IMR-90 (cell line): ENCODE measurements at regions of chr1 and their contacts with region 1.

Region 1: DNA sequence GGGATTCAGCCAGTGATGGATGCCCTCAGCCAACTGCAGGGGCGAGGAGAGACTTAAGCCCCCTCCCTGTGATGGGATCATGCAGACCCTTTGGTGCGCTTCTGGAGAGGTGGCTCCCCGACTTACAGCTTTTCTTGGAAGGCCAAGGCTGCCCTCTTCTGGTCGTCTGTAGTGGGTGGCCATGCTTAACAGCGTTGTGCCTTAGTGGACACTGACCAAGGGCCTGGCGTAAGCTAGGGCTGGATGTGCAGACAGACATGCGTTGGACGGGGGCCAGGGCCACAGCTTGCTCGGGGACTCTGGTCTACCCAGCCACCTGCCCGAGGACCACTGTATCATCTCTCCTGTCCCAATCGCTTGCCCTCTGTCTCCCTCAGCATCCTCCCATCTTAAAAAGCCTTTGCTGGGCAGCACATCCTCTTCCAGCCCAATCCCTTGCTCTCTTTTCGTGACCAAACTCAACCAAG is 5.5 kb downstream of the AZIN2 start:
- DNase-seq: peak; percentile 78
- ATAC-seq: peak; percentile 87
- H3K4me3 ChIP-seq: no peak overlapping the region
- H3K27ac ChIP-seq: no peak overlapping the region
- H3K4me1 ChIP-seq: peaks cover 2% of the 10 kb centered on the region
- H3K27me3 ChIP-seq: no peaks in the 10 kb centered on the region
- CTCF ChIP-seq: peak; percentile 87
- POLR2A ChIP-seq: no peak
- RAD21 ChIP-seq: peak; percentile 82

Region 2: DNA sequence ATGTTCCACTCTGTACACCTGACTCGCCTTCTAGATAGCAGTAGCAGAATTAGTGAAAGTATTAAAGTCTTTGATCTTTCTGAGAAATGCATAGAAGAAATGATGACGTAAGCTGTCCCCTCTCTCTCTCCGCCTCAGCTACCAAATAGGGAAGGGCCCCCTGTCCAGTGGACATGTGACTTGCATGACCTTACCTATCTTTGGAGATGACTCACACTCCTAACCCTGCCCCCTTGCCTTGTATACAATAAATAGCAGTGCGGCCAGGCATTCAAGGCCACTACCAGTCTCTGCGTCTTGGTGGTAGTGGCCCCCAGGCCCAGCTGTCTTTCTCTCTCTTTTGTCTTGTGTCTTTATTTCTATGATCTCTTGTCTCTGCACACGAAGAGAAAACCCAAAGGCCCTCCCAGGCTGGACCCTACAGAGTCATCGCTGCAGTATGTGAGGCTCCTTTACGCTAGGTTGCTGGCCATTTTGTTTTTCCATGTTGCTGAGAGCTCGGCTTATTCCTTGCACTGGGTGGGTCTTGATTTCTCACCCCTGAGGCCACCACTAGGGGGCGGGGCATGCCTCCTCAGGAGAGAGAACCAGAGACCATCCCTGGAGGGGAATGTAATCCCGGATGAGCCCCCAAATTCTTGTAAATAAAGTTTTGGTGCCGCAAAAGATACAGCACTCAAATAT is 637.5 kb before region 1 on chr1:
- CTCF ChIA-PET with region 1: no interaction called
- POLR2A ChIA-PET with region 1: no interaction called
- dilution Hi-C with region 1: no loop called
- in situ Hi-C with region 1: no loop called
- intact Hi-C with region 1: loop called (anchors 5 kb)
- DNase-seq: no peak
- ATAC-seq: no peak
- H3K4me3 ChIP-seq: no peak overlapping the region
- H3K27ac ChIP-seq: no peak overlapping the region
- H3K4me1 ChIP-seq: 0 out of 2 replicates have a peak, but pooled peaks cover 2% of the 10 kb centered on the region
- H3K27me3 ChIP-seq: peaks cover 4% of the 10 kb centered on the region
- CTCF ChIP-seq: no peak
- POLR2A ChIP-seq: no peak
- RAD21 ChIP-seq: no peak

Region 3: DNA sequence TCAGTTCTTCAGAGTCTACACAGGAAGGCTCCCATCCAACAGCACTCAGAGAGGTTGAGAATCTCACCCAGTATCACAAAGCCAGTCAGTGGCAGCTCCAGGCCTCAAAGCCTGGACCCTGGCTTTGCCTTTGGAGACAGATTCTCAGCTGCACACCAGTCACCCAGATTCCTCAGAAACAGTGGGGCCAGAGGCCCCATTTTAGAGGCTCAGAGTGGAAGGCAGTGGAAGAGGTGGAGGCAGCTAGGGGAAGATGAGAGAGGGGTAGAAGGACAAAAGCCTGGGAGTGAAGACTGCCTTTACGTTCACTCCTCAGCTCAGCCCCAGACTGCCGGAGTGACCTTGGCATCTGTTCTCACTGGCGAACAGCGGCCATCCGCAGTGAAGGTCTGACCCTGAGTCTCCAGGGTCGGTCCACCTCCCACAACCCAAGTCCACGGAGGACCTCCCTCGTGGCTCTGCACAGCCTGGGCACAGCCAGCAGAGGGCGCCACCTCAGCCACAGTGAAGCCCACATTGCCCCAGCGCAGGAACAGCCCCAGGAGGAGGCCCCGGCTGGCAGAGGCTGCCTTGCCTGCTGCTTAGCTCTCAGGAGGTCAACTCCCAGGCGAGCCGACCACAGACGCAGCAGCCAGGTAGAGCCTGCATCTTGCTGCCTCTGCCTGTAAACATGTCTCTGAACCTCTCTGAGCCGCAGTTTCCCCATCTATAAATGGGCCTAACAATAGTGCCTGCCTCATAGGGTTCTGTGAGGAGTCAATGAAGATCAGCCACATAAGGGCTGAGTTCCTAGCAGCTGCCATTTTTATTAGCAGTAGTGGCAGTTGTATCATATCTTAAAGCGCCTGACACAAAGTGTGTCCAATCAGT is 209.8 kb before region 1 on chr1:
- CTCF ChIA-PET with region 1: interaction called, 5 read pairs
- POLR2A ChIA-PET with region 1: no interaction called
- dilution Hi-C with region 1: no loop called
- in situ Hi-C with region 1: no loop called
- intact Hi-C with region 1: loop called (anchors 1 kb)
- DNase-seq: no peak
- ATAC-seq: peak; percentile 58
- H3K4me3 ChIP-seq: no peak overlapping the region
- H3K27ac ChIP-seq: no peak overlapping the region
- H3K4me1 ChIP-seq: no peaks in the 10 kb centered on the region
- H3K27me3 ChIP-seq: peaks cover 23% of the 10 kb centered on the region
- CTCF ChIP-seq: peak; percentile 58
- POLR2A ChIP-seq: no peak
- RAD21 ChIP-seq: peak; percentile 51

Region 4: GRCh38 chr1:32886004-32886827 is 200.2 kb before region 1 on chr1 and contains the start of gene HPCA:
- CTCF ChIA-PET with region 1: no interaction called
- POLR2A ChIA-PET with region 1: no interaction called
- dilution Hi-C with region 1: no loop called
- in situ Hi-C with region 1: no loop called
- intact Hi-C with region 1: loop called (anchors 1 kb)
- DNase-seq: peak; percentile 48
- ATAC-seq: peak; percentile 99
- H3K4me3 ChIP-seq: no peak within 1 kb of the TSS
- H3K27ac ChIP-seq: no peak within 1 kb of the TSS
- H3K4me1 ChIP-seq: no peaks in the 10 kb centered on the region
- H3K27me3 ChIP-seq: peaks cover 65% of the 10 kb centered on the region
- CTCF ChIP-seq: peak; percentile 91
- POLR2A ChIP-seq: no peak
- RAD21 ChIP-seq: peak; percentile 55
- total RNA-seq, gene HPCA: not detected in 2 replicates

Region 5: GRCh38 chr1:32933742-32934322 is 152.6 kb before region 1 on chr1:
- CTCF ChIA-PET with region 1: interaction called, 3 read pairs
- POLR2A ChIA-PET with region 1: no interaction called
- dilution Hi-C with region 1: no loop called
- in situ Hi-C with region 1: no loop called
- intact Hi-C with region 1: loop called (anchors 1 kb)
- DNase-seq: peak; percentile 19
- ATAC-seq: peak; percentile 56
- H3K4me3 ChIP-seq: no peak overlapping the region
- H3K27ac ChIP-seq: no peak overlapping the region
- H3K4me1 ChIP-seq: peaks cover 4% of the 10 kb centered on the region; the same call in 1 of the 2 replicates
- H3K27me3 ChIP-seq: no peaks in the 10 kb centered on the region
- CTCF ChIP-seq: no peak
- POLR2A ChIP-seq: no peak
- RAD21 ChIP-seq: no peak